Colonic mucosa (tissue), 4 donors: ENCODE measurements at regions of chr12 and their contacts with region 1.

Region 1: DNA sequence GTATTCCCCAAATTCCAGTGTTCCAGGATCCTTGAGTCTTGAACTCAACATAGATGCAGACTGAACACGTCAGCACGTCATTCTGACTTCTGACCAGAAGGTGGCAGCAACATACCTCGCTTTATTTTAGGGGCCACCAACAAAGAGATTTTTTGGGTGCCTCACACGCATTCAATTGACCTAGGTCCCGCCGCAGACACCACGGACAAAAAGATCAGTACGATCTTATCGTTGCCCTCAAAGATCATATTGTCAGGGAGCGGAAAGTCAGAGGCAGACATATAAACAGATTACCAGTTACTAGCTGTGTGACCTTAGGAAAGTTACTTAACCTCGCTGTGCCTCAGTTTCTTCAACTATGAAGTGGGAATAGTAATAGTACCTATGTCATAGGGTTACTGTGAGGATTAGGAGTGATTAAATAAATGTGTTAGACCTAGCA is 6.5 kb upstream of the PRPH start:
- DNase-seq: peak; percentile 67
- H3K4me3 ChIP-seq: no peak overlapping the region
- H3K27ac ChIP-seq: no peak overlapping the region
- H3K4me1 ChIP-seq: no peaks in the 10 kb centered on the region
- H3K27me3 ChIP-seq: no peaks in the 10 kb centered on the region
- CTCF ChIP-seq: peak; percentile 80

Region 2: GRCh38 chr12:49339464-49339861 is 51.0 kb after region 1 on chr12:
- intact Hi-C with region 1: loop called (anchors 2 kb)
- DNase-seq: peak; percentile 86
- H3K4me3 ChIP-seq: no peak overlapping the region
- H3K27ac ChIP-seq: no peak overlapping the region
- H3K4me1 ChIP-seq: peaks cover 20% of the 10 kb centered on the region
- H3K27me3 ChIP-seq: peaks cover 51% of the 10 kb centered on the region
- CTCF ChIP-seq: no peak

Region 3: DNA sequence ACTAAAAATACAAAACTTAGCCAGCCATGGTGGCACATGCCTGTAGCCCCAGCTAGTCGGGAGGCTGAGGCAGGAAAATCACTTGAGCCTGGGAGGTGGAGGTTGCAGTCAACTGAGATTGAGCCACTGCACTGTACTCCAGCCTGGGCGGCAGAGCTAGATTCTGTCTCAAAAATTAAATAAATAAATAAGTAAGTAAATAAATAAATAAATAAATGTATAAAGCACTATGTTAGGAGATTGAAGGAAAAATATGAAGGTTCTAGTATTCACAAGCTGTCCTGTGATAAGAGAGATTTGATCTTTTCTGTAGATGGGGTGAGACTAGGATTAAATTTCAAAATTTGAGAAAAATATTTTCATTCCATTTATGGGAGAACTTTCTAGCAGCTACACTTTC is 63.9 kb after region 1 on chr12:
- intact Hi-C with region 1: no loop called
- DNase-seq: no peak
- H3K4me3 ChIP-seq: no peak overlapping the region
- H3K27ac ChIP-seq: no peak overlapping the region
- H3K4me1 ChIP-seq: peaks cover 6% of the 10 kb centered on the region
- H3K27me3 ChIP-seq: peaks cover 5% of the 10 kb centered on the region
- CTCF ChIP-seq: no peak

Region 4: DNA sequence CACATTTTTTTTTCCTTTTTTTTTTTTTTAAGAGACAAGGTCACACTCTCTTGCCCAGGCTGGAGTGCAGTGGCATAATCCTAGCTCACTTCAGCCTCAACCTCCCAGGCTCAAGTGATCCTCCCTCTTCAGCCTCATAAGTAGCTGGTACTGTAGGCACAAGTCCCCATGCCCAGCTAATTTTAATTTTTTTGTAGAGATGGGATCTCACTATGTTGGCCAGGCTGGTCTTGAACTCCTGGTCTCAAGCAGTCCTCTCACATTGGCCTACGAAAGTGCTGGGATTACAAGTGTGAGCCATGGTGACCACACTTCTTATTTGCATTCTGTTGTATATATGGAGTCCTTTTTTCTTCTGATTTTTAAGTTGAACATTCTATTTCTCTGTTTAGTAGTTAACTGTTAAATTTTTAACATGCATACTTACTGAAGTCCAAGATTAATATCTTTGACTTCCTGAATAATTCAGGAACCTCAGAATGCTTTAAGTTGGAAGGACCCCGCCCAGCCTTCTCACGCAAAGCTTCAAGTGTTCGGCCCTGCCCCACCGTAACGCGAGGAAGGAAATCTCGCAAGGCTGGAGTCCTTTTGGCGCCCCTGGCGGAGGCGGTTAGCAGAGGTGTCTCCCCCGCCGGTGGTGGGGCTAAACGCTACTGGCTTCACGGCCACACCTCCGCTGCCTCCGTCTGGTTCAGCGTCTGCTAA is 100.4 kb after region 1 on chr12:
- intact Hi-C with region 1: no loop called
- DNase-seq: peak; percentile 22
- H3K4me3 ChIP-seq: no peak overlapping the region
- H3K27ac ChIP-seq: no peak overlapping the region
- H3K4me1 ChIP-seq: no peaks in the 10 kb centered on the region
- H3K27me3 ChIP-seq: no peaks in the 10 kb centered on the region
- CTCF ChIP-seq: no peak

Region 5: GRCh38 chr12:49583366-49584094 is 295.1 kb after region 1 on chr12:
- intact Hi-C with region 1: no loop called
- DNase-seq: no peak
- H3K4me3 ChIP-seq: no peak overlapping the region
- H3K27ac ChIP-seq: no peak overlapping the region
- H3K4me1 ChIP-seq: no peaks in the 10 kb centered on the region
- H3K27me3 ChIP-seq: no peaks in the 10 kb centered on the region
- CTCF ChIP-seq: no peak